Astrocyte of the cerebellum (primary cell): ENCODE measurements at regions of chrX and their contacts with region 1.

Region 1: DNA sequence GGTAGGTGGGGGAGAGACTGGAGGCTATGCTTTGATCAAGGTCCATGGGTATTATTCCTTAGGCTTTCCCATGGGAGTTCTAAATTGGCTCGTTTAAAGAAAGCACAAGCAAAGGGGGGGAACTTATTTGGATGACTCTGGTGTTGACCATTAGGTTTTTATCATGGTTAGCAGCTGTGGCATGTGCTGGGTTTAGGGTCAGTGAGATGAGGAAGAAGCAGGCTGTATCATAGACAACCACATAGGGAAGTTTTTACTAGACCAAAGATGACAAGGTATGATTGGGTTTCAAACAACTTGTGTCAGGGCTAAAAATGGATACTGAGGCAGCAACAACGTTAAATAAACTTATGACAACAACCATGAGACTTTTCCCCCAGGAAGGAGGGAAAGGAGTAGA is 97.7 kb downstream of the DNAAF6 start:
- DNase-seq: no peak
- H3K4me3 ChIP-seq: no peak overlapping the region
- CTCF ChIP-seq: no peak

Region 2: GRCh38 chrX:106397801-106398538 is 906.2 kb before region 1 on chrX:
- in situ Hi-C with region 1: no loop called
- DNase-seq: peak; percentile 13
- H3K4me3 ChIP-seq: no peak overlapping the region
- CTCF ChIP-seq: peak; percentile 12

Region 3: DNA sequence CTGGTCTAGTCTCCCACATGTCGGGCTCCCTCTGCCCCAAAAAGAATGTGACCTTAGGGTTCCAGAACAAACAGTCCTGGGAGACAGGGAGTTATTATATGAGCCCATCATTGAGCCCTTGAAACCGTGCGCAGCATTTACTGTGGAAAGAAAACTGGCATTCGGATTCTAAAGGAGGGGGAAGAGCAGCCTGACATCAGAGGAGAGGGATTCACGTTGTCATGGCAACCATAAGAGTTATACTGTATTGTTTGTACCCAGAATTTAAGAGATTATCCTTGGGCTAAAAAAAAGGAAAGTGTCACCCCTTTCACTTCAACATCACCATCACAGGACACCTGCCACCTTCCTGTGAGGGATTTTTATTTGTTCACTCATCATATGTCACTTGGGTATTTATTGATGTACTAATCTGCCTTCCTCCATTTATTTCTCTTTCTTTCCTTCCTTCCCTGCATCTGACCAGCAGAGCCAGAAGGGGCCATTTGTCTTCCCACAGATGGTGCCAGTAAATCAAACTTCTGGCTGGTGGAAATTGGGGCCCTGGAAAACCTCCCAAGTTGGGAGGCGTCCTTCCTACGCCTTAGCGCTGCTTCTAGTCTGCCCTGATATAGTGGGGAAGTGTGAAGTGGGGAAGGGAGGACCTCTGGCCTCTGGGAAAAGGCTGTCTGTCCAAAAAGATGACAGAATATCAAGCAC is 80.4 kb after region 1 on chrX:
- in situ Hi-C with region 1: loop called (anchors 5 kb)
- DNase-seq: no peak
- H3K4me3 ChIP-seq: no peak overlapping the region
- CTCF ChIP-seq: no peak

Region 4: GRCh38 chrX:107804427-107804826 is 500.3 kb after region 1 on chrX:
- in situ Hi-C with region 1: no loop called
- DNase-seq: no peak
- H3K4me3 ChIP-seq: no peak overlapping the region
- CTCF ChIP-seq: no peak